GM12878 (cell line): ENCODE measurements at regions of chr3 and their contacts with region 1.

Region 1: DNA sequence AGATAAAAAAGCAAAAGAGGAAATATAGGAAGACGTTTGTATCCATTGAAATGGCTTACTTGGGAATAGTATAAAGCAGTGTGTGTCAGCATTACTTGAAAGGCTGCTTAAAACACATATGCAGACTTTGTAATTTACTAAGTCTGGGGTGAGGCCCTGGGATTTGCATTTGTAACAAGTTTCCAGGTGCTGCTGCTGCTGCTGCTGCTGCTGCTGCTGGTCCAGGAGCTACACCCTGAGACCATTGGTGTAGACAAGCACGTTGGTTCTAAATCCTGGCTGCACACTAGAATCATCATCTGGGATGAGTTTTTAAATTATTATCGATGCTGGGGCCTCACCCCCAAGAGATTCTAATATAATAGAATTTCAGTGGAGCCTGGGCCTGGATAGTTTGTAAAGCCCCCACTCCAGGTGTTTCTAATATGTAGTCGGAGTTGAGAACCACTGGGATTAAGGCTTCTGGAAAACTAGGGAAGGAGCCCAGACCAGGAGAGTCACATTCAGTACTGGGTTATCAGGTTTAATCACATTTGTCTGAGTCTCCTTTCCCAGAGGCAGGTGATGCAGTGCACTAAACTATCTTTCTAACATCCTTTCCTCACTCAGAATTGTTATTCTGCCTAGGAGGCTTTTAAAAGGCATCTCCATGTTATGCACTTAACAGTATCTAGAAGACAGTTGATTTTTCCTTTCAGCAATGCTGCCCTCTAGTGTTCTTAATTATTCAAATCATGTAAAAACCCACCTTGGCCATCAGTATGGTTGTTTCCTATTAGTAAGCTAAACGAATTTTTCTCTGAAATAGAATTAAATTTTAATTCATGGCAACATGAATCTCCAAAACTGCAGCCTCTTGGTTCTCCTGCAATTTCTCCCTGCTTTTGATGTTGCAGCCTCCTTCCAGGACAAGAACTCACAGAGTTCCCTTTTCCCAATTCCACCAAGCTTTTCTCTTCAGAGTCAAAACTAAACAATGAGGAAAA is 45.4 kb downstream of the SSR3 start:
- DNase-seq: no peak
- ATAC-seq: peak; percentile 96
- H3K4me3 ChIP-seq: no peak overlapping the region
- H3K27ac ChIP-seq: no peak overlapping the region
- H3K4me1 ChIP-seq: no peaks in the 10 kb centered on the region
- H3K27me3 ChIP-seq: no peaks in the 10 kb centered on the region
- CTCF ChIP-seq: peak; percentile 36 to 70 (median 45); a peak in 4 of 6 replicates
- EP300 ChIP-seq: no peak
- POLR2A ChIP-seq: no peak
- RAD21 ChIP-seq: peak; percentile 86

Region 2: GRCh38 chr3:156341831-156342416 is 167.6 kb before region 1 on chr3:
- CTCF ChIA-PET with region 1: interaction called, 3 read pairs
- POLR2A ChIA-PET with region 1: no interaction called
- RAD21 ChIA-PET with region 1: interaction called, 6 read pairs
- SMC1A ChIA-PET with region 1: no interaction called
- in situ Hi-C with region 1: no loop called
- intact Hi-C with region 1: loop called (anchors 5 kb)
- DNase-seq: peak; percentile 30
- ATAC-seq: peak; percentile 99
- H3K4me3 ChIP-seq: no peak overlapping the region
- H3K27ac ChIP-seq: no peak overlapping the region
- H3K4me1 ChIP-seq: peaks cover 6% of the 10 kb centered on the region
- H3K27me3 ChIP-seq: no peaks in the 10 kb centered on the region; a peak in 1 of 4 replicates
- CTCF ChIP-seq: peak; percentile 42 to 53 (median 44); a peak in 5 of 6 replicates
- EP300 ChIP-seq: peak; percentile 74 to 89
- POLR2A ChIP-seq: no peak
- RAD21 ChIP-seq: peak; percentile 48; the same call in 1 of the 2 replicates

Region 3: DNA sequence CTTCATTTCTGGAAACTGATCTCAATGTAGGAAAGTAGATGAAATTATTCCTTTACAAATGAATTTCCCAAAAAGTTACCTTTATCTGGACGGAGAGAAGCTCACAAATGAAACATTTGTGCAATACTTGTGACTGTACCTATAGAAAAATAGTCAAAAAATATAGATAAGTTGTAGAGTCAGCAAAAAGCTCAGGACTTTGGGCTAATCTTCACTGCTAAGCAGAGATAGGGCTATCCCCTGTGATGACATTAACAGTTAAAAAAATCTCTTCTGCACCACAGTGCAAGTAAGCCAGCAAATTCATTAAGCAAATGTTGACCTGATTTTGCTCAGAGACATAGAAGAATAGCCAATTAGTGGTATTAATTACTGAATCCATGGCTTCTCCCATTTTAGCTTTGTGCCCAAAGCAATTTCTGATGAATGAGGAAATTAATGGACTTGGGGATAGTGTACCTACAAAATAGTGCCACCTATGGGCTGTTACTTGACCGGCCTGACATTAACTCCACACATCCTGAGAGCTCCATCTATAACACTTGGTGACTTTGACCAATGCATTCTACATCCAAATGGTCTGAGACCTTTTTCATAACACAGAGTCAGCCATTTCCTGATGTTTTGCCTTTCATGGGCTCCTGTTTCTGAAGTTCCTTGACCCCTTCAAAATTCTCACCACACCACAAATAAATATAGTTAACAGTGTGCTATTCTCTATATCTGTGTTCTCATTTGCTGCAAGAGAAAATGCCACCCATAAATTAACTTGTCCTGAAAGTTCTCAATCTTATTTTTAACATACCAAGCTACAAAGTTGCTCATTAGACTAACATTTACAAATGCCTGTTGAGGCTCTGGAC is 59.5 kb before region 1 on chr3:
- CTCF ChIA-PET with region 1: interaction called, 59 read pairs
- POLR2A ChIA-PET with region 1: no interaction called
- RAD21 ChIA-PET with region 1: interaction called, 6 read pairs
- SMC1A ChIA-PET with region 1: interaction called, 35 read pairs
- in situ Hi-C with region 1: no loop called
- intact Hi-C with region 1: loop called (anchors 1 kb)
- DNase-seq: no peak
- ATAC-seq: peak; percentile 86
- H3K4me3 ChIP-seq: no peak overlapping the region
- H3K27ac ChIP-seq: no peak overlapping the region
- H3K4me1 ChIP-seq: no peaks in the 10 kb centered on the region
- H3K27me3 ChIP-seq: no peaks in the 10 kb centered on the region; a peak in 1 of 4 replicates
- CTCF ChIP-seq: peak; percentile 54 to 65 (median 65)
- EP300 ChIP-seq: no peak
- POLR2A ChIP-seq: no peak
- RAD21 ChIP-seq: peak; percentile 41

Region 4: DNA sequence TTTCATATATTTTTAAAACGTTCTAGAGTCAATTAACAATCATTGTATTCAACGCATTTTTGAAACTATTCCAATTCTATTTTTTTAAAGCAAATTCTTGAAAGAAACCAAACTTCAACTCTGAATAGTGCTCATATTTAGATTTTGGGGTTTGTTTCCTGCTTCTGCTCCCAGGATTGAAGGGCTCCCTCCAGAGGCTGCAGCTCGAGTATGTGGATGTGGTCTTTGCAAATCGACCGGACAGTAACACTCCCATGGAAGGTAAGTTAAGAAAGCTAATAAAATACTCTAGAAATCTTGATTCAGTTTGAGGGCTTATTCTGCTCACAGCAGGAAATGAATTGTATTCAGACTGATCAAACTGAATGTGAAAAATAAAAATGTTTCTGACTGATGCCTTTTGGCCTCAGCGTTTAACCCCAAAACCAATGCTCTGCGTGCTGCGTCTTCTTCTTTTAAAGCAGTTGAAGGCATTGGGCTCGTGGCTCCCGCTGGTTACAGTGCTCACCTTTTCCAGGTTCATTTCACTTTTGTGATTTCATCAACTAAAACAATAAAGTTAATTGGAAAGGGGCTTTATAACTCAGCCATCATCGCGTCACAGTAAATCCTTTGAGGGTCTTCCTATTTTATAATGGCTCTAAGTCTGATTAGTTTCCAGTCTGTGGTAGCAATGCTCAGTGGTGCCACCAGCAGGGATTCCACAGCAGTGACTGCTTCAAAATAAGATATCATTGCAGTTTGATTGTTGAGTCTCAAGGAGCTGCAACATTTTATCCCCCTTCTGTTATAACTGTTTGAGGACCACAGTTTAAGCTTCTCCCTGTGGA is 34.7 kb before region 1 on chr3:
- CTCF ChIA-PET with region 1: interaction called, 75 read pairs
- POLR2A ChIA-PET with region 1: no interaction called
- RAD21 ChIA-PET with region 1: interaction called, 5 read pairs
- SMC1A ChIA-PET with region 1: interaction called, 72 read pairs
- in situ Hi-C with region 1: no loop called
- intact Hi-C with region 1: loop called (anchors 2 kb)
- DNase-seq: no peak
- ATAC-seq: peak; percentile 56
- H3K4me3 ChIP-seq: no peak overlapping the region
- H3K27ac ChIP-seq: no peak overlapping the region
- H3K4me1 ChIP-seq: no peaks in the 10 kb centered on the region
- H3K27me3 ChIP-seq: peaks cover 0 to 2% of the 10 kb centered on the region in 2 experiments; a peak in 3 of 4 replicates
- CTCF ChIP-seq: peak; percentile 30 to 40 (median 35); a peak in 5 of 6 replicates
- EP300 ChIP-seq: no peak
- POLR2A ChIP-seq: no peak
- RAD21 ChIP-seq: no peak

Region 5: GRCh38 chr3:156492801-156493261 is 16.7 kb before region 1 on chr3:
- CTCF ChIA-PET with region 1: interaction called, 7 read pairs
- POLR2A ChIA-PET with region 1: no interaction called
- RAD21 ChIA-PET with region 1: interaction called, 4 read pairs
- SMC1A ChIA-PET with region 1: interaction called, 72 read pairs
- in situ Hi-C with region 1: no loop called
- intact Hi-C with region 1: no loop called
- DNase-seq: no peak
- ATAC-seq: no peak
- H3K4me3 ChIP-seq: no peak overlapping the region
- H3K27ac ChIP-seq: no peak overlapping the region
- H3K4me1 ChIP-seq: peaks cover 14% of the 10 kb centered on the region
- H3K27me3 ChIP-seq: no peaks in the 10 kb centered on the region
- CTCF ChIP-seq: no peak
- EP300 ChIP-seq: no peak
- POLR2A ChIP-seq: no peak
- RAD21 ChIP-seq: no peak

Region 6: GRCh38 chr3:156525808-156526207 is 16.3 kb after region 1 on chr3:
- CTCF ChIA-PET with region 1: interaction called, 12 read pairs
- POLR2A ChIA-PET with region 1: no interaction called
- RAD21 ChIA-PET with region 1: interaction called, 5 read pairs
- SMC1A ChIA-PET with region 1: interaction called, 12 read pairs
- in situ Hi-C with region 1: no loop called
- intact Hi-C with region 1: no loop called
- DNase-seq: no peak
- ATAC-seq: no peak
- H3K4me3 ChIP-seq: no peak overlapping the region
- H3K27ac ChIP-seq: no peak overlapping the region
- H3K4me1 ChIP-seq: no peaks in the 10 kb centered on the region
- H3K27me3 ChIP-seq: no peaks in the 10 kb centered on the region
- CTCF ChIP-seq: no peak
- EP300 ChIP-seq: no peak
- POLR2A ChIP-seq: no peak
- RAD21 ChIP-seq: no peak